Naive thymus-derived CD4-positive, alpha-beta T cell (primary cell): ENCODE measurements at regions of chr11 and their contacts with region 1.

Region 1: DNA sequence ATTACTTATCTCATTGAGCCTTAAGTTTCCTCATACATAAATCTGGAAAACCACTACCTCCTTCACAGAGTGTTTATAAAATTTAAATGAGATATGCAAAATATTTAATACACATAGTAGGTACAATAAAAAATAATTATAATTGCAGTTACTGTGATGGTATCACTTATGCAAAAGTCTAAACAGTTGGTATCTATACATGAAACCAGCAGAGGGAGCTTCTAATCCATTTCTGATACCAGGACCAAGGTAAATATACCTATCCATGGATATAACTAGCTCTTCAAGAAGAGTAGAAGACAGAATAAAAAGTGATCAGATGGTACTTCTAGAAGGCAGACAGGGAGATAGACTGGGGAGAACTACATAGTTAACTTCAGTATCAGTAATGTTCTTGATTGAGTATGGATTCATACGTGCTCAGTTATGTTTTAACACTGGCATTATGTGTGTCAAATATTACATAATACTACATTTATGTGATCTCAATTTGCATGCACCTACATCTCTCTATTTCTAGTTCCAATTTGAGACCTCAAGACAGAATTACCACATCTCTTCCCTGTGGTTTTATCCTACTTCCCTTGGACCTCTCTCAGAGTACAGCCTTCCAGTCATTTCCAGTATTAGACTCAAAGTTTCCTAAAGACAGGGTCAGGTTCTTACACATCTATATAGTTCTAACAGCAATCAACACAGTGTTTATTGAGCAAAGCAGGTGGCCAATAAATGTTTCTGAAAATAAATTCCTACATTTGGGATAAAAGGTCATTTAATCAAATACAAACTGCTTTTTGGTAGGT is 13.7 kb upstream of the TSG101 start:
- DNase-seq: peak in 6 of 9 donors; percentile 30 to 60 (median 44)
- ATAC-seq: peak; percentile 73
- H3K4me3 ChIP-seq: no peak overlapping the region
- H3K4me3 Mint-ChIP-seq: no peak overlapping the region
- H3K27ac ChIP-seq: no peak overlapping the region
- H3K27ac Mint-ChIP-seq: peak overlapping the region in 2 of 9 donors; percentile 2 to 13
- H3K4me1 ChIP-seq: no peaks in the 10 kb centered on the region
- H3K4me1 Mint-ChIP-seq: peaks cover 0 to 8% (median 0%) of the 10 kb centered on the region in 7 donors
- H3K27me3 ChIP-seq: no peaks in the 10 kb centered on the region
- H3K27me3 Mint-ChIP-seq: no peaks in the 10 kb centered on the region

Region 2: DNA sequence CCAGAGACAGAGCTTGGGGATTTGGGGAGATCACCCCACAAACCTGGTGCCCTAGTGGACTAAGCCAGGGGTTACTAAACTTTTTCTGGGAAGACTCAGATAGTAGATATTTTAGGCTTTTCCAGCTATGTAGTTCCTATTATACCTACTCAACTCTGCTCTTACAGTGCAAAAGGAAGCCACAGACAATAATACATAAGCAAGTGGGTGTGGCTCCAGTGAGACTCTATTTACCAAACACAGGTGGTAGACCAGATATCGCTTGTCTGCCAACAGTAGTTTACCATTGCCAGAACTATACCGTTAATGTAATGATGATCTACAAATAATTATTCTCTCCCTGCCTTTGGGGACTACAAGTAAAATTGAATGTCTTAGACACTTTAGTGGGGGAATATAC is 121.4 kb before region 1 on chr11:
- CTCF ChIA-PET with region 1: no interaction called
- POLR2A ChIA-PET with region 1: no interaction called
- intact Hi-C with region 1: no loop called
- DNase-seq: no peak
- ATAC-seq: no peak
- H3K4me3 ChIP-seq: no peak overlapping the region
- H3K4me3 Mint-ChIP-seq: no peak overlapping the region
- H3K27ac ChIP-seq: no peak overlapping the region
- H3K27ac Mint-ChIP-seq: no peak overlapping the region
- H3K4me1 ChIP-seq: no peaks in the 10 kb centered on the region
- H3K4me1 Mint-ChIP-seq: peaks cover 2 to 12% (median 11%) of the 10 kb centered on the region in 7 donors
- H3K27me3 ChIP-seq: no peaks in the 10 kb centered on the region
- H3K27me3 Mint-ChIP-seq: peaks cover 0 to 2% (median 0%) of the 10 kb centered on the region in 5 donors

Region 3: GRCh38 chr11:18650859-18651557 is 110.6 kb after region 1 on chr11:
- CTCF ChIA-PET with region 1: no interaction called
- POLR2A ChIA-PET with region 1: no interaction called
- intact Hi-C with region 1: loop called (anchors 1 kb)
- DNase-seq: peak in 5 of 9 donors; percentile 11 to 37 (median 20)
- ATAC-seq: peak; percentile 73
- H3K4me3 ChIP-seq: no peak overlapping the region
- H3K4me3 Mint-ChIP-seq: no peak overlapping the region
- H3K27ac ChIP-seq: no peak overlapping the region
- H3K27ac Mint-ChIP-seq: peak overlapping the region in 1 of 9 donors; percentile 30
- H3K4me1 ChIP-seq: no peaks in the 10 kb centered on the region
- H3K4me1 Mint-ChIP-seq: peaks cover 0 to 15% (median 0%) of the 10 kb centered on the region in 7 donors
- H3K27me3 ChIP-seq: no peaks in the 10 kb centered on the region
- H3K27me3 Mint-ChIP-seq: no peaks in the 10 kb centered on the region

Region 4: GRCh38 chr11:18706330-18707243 is 166.2 kb after region 1 on chr11:
- CTCF ChIA-PET with region 1: interaction called, 3 read pairs
- POLR2A ChIA-PET with region 1: interaction called, 4 read pairs
- intact Hi-C with region 1: loop called in 1 of 2 experiments (anchors 1 kb)
- DNase-seq: peak in 8 of 9 donors; percentile 34 to 73 (median 64)
- ATAC-seq: peak; percentile 83
- H3K4me3 ChIP-seq: peak overlapping the region; percentile 88
- H3K4me3 Mint-ChIP-seq: peak overlapping the region; percentile 90 to 98 (median 93)
- H3K27ac ChIP-seq: peak overlapping the region; percentile 68
- H3K27ac Mint-ChIP-seq: peak overlapping the region; percentile 81 to 98 (median 90)
- H3K4me1 ChIP-seq: peaks cover 9 to 10% of the 10 kb centered on the region in 2 donors
- H3K4me1 Mint-ChIP-seq: peaks cover 15 to 29% (median 25%) of the 10 kb centered on the region in 7 donors
- H3K27me3 ChIP-seq: no peaks in the 10 kb centered on the region
- H3K27me3 Mint-ChIP-seq: peaks cover 0 to 55% (median 0%) of the 10 kb centered on the region in 5 donors

Region 5: DNA sequence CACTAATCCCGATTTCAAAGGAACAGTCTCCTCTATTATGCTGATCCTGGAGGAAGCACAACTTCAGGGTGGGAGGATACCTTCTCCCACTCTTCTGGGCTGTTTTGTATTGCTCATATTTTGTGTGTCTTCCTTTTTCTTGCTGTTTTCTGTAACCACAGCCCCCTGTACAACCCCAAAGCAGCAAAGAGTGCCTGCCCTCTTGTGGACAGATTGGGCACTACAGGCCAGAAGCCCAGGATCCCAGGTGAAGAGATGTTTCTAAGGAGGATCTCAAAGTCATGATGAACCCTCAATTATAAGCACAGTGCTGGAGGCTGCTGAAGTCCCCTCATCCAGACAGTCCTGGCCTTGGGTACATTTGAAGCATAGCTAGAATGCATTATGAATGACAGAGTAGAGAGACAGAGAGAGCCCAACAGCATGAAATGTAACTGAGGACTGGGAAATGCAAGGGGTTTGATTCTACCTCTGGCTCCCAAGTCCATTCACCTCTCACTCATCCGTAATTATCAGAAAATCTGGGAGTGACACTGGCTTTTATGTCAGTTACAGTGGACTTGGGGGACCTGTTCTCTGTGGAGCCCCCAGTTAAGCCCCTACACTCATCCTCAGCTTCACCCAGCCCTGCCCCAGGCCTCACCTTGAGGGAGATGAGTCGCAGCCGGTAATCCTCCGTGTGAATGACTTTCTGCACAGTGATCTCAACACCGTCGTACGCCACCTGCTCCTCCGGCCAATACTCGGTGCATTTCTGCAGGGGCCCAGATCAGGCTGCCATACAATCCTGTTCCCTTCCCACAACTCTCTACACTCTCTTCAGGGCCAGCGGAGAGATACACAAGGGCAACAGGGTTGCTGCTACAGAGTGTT is 191.8 kb after region 1 on chr11:
- CTCF ChIA-PET with region 1: interaction called, 24 read pairs
- POLR2A ChIA-PET with region 1: interaction called, 6 read pairs
- intact Hi-C with region 1: loop called (anchors 1 kb)
- DNase-seq: peak; percentile 44 to 81 (median 65)
- ATAC-seq: peak; percentile 79
- H3K4me3 ChIP-seq: no peak overlapping the region
- H3K4me3 Mint-ChIP-seq: no peak overlapping the region
- H3K27ac ChIP-seq: no peak overlapping the region
- H3K27ac Mint-ChIP-seq: peak overlapping the region in 1 of 9 donors; percentile 32
- H3K4me1 ChIP-seq: peaks cover 5 to 6% of the 10 kb centered on the region in 2 donors
- H3K4me1 Mint-ChIP-seq: peaks cover 4 to 15% (median 13%) of the 10 kb centered on the region in 7 donors
- H3K27me3 ChIP-seq: no peaks in the 10 kb centered on the region
- H3K27me3 Mint-ChIP-seq: peaks cover 0 to 9% (median 0%) of the 10 kb centered on the region in 5 donors

Region 6: DNA sequence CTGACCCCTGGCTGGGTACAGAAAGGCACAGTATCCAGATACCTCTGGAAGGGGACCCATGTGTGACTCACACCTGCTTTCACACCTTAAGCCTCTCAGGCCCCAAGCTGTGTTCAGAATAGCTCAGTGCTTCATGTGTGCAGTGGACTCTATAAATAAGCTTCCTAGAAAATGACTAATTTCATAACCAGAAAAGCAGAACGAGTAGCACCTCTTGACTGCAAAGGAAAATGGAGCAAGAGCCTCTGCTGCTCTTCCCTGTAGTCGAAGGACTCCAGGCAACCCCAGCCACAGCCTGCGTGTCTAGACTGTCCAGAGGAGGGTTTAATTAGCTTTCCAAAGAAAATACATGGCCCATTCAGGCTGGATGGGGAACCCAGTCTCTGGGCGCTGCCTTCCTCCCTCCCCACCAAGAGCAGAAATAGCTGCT is 228.1 kb after region 1 on chr11:
- CTCF ChIA-PET with region 1: interaction called, 40 read pairs
- POLR2A ChIA-PET with region 1: no interaction called
- intact Hi-C with region 1: loop called (anchors 1 kb)
- DNase-seq: no peak
- ATAC-seq: no peak
- H3K4me3 ChIP-seq: no peak overlapping the region
- H3K4me3 Mint-ChIP-seq: no peak overlapping the region
- H3K27ac ChIP-seq: no peak overlapping the region
- H3K27ac Mint-ChIP-seq: no peak overlapping the region
- H3K4me1 ChIP-seq: no peaks in the 10 kb centered on the region
- H3K4me1 Mint-ChIP-seq: peaks cover 0 to 28% (median 0%) of the 10 kb centered on the region in 7 donors
- H3K27me3 ChIP-seq: no peaks in the 10 kb centered on the region
- H3K27me3 Mint-ChIP-seq: peaks cover 4 to 27% (median 16%) of the 10 kb centered on the region in 5 donors

Region 7: DNA sequence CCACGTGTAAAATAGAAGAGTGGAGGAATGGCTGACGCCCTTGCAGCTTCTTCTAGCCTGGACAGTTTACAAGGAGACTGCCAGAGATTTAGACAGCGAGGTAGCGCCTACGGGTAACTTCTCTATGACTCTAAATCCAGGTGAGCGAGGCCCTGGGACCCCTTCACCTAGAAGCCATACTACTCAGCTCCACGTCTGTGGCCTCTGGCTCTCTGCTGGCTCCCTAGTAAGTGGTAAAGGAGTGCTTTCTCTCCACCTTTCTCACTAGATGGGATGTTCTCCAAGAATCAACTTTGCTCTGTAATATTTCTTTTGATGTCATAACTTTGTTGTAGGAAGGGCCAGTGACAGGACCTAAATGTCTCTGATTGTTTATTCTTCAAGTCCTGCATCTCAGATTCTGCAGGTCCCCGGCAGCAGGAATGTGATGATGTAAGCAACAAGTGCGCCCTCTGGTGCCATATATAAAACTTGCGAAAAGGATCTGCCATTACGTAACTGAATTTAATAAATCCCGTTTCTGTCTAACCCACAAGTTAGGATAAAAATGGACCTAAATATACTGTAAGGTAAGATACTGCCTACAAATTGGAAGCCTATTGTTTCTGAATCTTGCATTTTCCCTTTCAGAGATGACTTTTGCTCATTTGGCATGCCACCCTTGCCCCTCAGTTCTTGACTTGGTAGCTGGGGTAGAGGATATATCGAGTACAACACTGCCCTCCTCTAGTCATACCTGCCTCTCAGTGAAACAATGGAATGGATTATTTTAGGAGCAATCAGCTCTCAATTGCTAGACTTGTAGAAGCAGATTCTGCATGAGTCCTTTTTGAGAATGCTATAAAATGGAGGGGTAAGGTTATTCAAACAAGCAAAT is 262.2 kb after region 1 on chr11:
- CTCF ChIA-PET with region 1: no interaction called
- POLR2A ChIA-PET with region 1: no interaction called
- intact Hi-C with region 1: loop called in 1 of 2 experiments (anchors 1 kb)
- DNase-seq: peak in 6 of 9 donors; percentile 4 to 47 (median 25)
- ATAC-seq: peak; percentile 49
- H3K4me3 ChIP-seq: no peak overlapping the region
- H3K4me3 Mint-ChIP-seq: peak overlapping the region in 2 of 10 donors; percentile 5 to 21
- H3K27ac ChIP-seq: no peak overlapping the region
- H3K27ac Mint-ChIP-seq: peak overlapping the region in 1 of 9 donors; percentile 72
- H3K4me1 ChIP-seq: no peaks in the 10 kb centered on the region
- H3K4me1 Mint-ChIP-seq: peaks cover 0 to 5% (median 4%) of the 10 kb centered on the region in 7 donors
- H3K27me3 ChIP-seq: no peaks in the 10 kb centered on the region
- H3K27me3 Mint-ChIP-seq: peaks cover 5 to 54% (median 8%) of the 10 kb centered on the region in 5 donors